ENCODE measurements at regions of chr3 and their contacts with region 1.

Region 1: DNA sequence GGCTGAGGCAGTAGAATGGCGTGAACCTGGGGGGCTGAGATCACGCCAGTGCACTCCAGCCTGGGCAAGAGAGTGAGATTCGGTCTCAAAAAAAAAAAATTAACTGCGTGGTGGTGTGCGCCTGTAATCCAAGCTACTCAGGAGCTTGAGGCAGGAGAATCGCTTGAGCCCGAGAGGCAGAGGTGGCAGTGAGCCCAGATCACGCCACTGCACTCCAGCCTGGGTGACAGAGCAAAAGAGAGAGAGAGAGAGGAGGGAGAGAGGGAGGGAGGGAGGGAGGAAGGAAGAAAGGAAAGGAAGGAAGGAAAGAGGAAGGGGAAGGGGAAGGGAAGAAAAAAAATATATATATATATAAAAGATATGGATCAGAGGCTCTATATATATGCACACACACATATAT is 6.0 kb downstream of the TM4SF19 start:
- DNase-seq: no peak
- H3K4me3 Mint-ChIP-seq: no peak overlapping the region
- H3K27ac Mint-ChIP-seq: no peak overlapping the region
- H3K4me1 Mint-ChIP-seq: peaks cover 6% of the 10 kb centered on the region
- H3K27me3 Mint-ChIP-seq: no peaks in the 10 kb centered on the region
- CTCF ChIP-seq: no peak

Region 2: GRCh38 chr3:196423044-196423781 is 91.0 kb after region 1 on chr3:
- CTCF ChIA-PET with region 1: interaction called, 10 read pairs
- intact Hi-C with region 1: no loop called
- DNase-seq: no peak
- H3K4me3 Mint-ChIP-seq: no peak overlapping the region
- H3K27ac Mint-ChIP-seq: no peak overlapping the region
- H3K4me1 Mint-ChIP-seq: peaks cover 17% of the 10 kb centered on the region
- H3K27me3 Mint-ChIP-seq: no peaks in the 10 kb centered on the region
- CTCF ChIP-seq: no peak